B cell (primary cell): ENCODE measurements at regions of chr20 and their contacts with region 1.

Region 1: DNA sequence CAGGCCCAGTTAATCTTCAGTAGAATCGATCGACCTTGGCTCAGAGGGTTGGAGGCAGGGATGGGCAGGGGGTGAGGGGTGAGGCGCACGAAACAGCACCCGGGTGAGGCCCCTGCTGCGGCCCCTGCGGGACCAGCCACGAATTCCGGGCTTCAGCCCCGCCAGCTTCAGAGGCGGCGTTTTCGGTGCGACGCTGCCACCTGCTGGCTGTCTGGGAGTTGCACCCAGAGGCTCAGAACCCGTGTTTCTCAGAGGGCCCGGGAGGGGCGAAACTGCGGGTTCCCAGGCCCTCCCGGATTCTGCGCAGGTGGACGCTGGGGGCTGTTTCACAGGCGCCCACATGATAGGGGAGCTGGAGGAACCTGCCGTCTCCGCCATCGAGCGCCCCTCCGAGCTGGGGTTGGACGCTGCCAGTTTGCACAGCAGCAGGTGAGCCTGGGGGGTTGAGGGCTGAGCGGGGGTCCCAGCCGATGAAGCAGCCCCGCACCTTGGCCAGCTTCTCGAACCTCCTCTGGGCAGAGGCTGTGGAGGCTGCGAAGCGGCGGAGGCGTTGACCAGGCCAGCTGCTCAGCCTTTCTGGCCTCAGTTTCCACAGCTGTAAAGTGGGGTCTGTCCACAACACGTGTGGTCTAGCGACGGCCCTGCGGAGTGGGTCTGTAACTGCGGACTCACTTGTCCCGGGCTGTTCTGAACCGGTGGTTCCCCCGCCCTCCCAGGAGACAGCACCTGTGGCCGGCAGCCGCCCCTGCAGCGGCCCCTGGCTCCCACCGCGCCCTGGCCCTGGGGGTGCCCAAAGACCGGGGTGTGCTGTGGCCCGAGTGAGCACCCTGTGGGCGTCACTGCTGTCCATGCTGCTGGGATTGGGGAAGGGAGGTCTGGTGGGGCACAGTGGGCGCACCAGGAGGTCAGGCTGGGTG is 2.5 kb upstream of the BHLHE23 start:
- DNase-seq: peak; percentile 89
- ATAC-seq: peak; percentile 80
- H3K4me3 ChIP-seq: peak overlapping the region in 1 of 5 experiments; percentile 42
- H3K4me3 Mint-ChIP-seq: peak overlapping the region; percentile 86
- H3K27ac ChIP-seq: no peak overlapping the region
- H3K27ac Mint-ChIP-seq: peak overlapping the region; percentile 21
- H3K4me1 ChIP-seq: peaks cover 52 to 57% of the 10 kb centered on the region in 2 donors
- H3K4me1 Mint-ChIP-seq: peaks cover 21% of the 10 kb centered on the region
- H3K27me3 ChIP-seq: peaks cover 0 to 84% (median 51%) of the 10 kb centered on the region in 4 experiments
- H3K27me3 Mint-ChIP-seq: peaks cover 47% of the 10 kb centered on the region
- CTCF ChIP-seq: peak; percentile 95

Region 2: GRCh38 chr20:62668441-62669027 is 340.8 kb before region 1 on chr20:
- CTCF ChIA-PET with region 1: no interaction called
- POLR2A ChIA-PET with region 1: no interaction called
- intact Hi-C with region 1: loop called (anchors 2 kb)
- DNase-seq: peak; percentile 56
- ATAC-seq: no peak
- H3K4me3 ChIP-seq: no peak overlapping the region
- H3K4me3 Mint-ChIP-seq: no peak overlapping the region
- H3K27ac ChIP-seq: no peak overlapping the region
- H3K27ac Mint-ChIP-seq: no peak overlapping the region
- H3K4me1 ChIP-seq: no peaks in the 10 kb centered on the region
- H3K4me1 Mint-ChIP-seq: no peaks in the 10 kb centered on the region
- H3K27me3 ChIP-seq: no peaks in the 10 kb centered on the region
- H3K27me3 Mint-ChIP-seq: no peaks in the 10 kb centered on the region
- CTCF ChIP-seq: peak; percentile 73

Region 3: GRCh38 chr20:62846188-62846890 is 163.0 kb before region 1 on chr20:
- CTCF ChIA-PET with region 1: no interaction called
- POLR2A ChIA-PET with region 1: no interaction called
- intact Hi-C with region 1: no loop called
- DNase-seq: no peak
- ATAC-seq: no peak
- H3K4me3 ChIP-seq: no peak overlapping the region
- H3K4me3 Mint-ChIP-seq: no peak overlapping the region
- H3K27ac ChIP-seq: no peak overlapping the region
- H3K27ac Mint-ChIP-seq: no peak overlapping the region
- H3K4me1 ChIP-seq: no peaks in the 10 kb centered on the region
- H3K4me1 Mint-ChIP-seq: no peaks in the 10 kb centered on the region
- H3K27me3 ChIP-seq: no peaks in the 10 kb centered on the region
- H3K27me3 Mint-ChIP-seq: no peaks in the 10 kb centered on the region
- CTCF ChIP-seq: no peak

Region 4: GRCh38 chr20:62972270-62973032 is 36.9 kb before region 1 on chr20:
- CTCF ChIA-PET with region 1: interaction called, 36 read pairs
- POLR2A ChIA-PET with region 1: interaction called, 12 read pairs
- intact Hi-C with region 1: loop called (anchors 1 kb)
- DNase-seq: peak; percentile 88
- ATAC-seq: peak; percentile 96
- H3K4me3 ChIP-seq: peak overlapping the region in 3 of 5 experiments; percentile 38 to 49 (median 45)
- H3K4me3 Mint-ChIP-seq: peak overlapping the region; percentile 82
- H3K27ac ChIP-seq: no peak overlapping the region
- H3K27ac Mint-ChIP-seq: peak overlapping the region; percentile 37
- H3K4me1 ChIP-seq: peaks cover 21 to 26% of the 10 kb centered on the region in 2 donors
- H3K4me1 Mint-ChIP-seq: peaks cover 32% of the 10 kb centered on the region
- H3K27me3 ChIP-seq: peaks cover 0 to 65% (median 28%) of the 10 kb centered on the region in 4 experiments
- H3K27me3 Mint-ChIP-seq: peaks cover 39% of the 10 kb centered on the region
- CTCF ChIP-seq: peak; percentile 85

Region 5: DNA sequence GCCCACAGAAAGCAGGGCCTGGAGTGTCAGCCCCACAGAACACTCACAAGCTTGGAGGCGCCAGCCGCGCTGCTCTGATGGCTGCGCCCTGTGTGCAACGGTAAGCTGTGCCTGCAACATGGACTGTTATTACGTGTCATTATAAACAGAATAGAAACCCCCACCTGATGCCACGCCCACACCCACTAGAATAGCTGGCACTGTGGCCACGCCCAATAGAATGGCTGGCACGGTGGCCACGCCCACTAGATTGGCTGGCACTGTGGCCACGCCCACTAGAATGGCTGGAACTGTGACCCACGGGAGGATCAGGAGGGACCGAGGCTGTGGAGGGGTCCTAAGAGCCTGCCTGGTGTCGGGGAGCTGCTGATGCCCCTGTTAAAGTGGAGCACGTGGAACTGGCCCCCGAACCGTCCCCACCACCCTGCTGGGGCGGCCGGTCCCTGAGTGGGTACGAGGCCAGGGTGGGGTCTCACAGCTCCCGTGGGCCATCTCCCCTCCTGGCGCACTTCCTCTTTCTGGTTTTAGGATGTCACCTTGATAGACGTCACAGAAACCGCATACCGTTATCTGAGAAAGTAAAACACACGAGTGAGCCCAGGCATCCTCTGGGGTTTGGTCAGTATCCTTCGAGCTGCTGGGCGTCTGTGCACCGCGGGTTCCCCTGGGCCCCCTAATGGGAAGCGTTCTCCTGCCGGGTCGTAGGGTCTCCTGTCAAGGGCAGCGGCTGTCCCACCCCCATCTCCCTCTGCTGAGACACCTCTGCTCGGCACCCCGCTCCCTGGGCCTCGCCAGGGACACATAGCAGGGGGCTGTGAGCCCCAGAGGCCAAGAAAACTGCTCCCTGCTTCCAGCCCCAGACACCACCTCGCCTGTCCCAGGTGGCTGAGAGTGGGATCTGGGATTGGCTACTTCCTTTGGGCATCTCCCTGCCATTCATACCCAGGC is 31.4 kb before region 1 on chr20:
- CTCF ChIA-PET with region 1: interaction called, 3 read pairs
- POLR2A ChIA-PET with region 1: interaction called, 12 read pairs
- intact Hi-C with region 1: loop called (anchors 1 kb)
- DNase-seq: peak; percentile 96
- ATAC-seq: peak; percentile 79
- H3K4me3 ChIP-seq: peak overlapping the region in 4 of 5 experiments; percentile 12 to 54 (median 35)
- H3K4me3 Mint-ChIP-seq: peak overlapping the region; percentile 88
- H3K27ac ChIP-seq: no peak overlapping the region
- H3K27ac Mint-ChIP-seq: peak overlapping the region; percentile 91
- H3K4me1 ChIP-seq: peaks cover 63 to 64% of the 10 kb centered on the region in 2 donors
- H3K4me1 Mint-ChIP-seq: peaks cover 51% of the 10 kb centered on the region
- H3K27me3 ChIP-seq: peaks cover 0 to 95% (median 53%) of the 10 kb centered on the region in 4 experiments
- H3K27me3 Mint-ChIP-seq: peaks cover 47% of the 10 kb centered on the region
- CTCF ChIP-seq: no peak

Region 6: DNA sequence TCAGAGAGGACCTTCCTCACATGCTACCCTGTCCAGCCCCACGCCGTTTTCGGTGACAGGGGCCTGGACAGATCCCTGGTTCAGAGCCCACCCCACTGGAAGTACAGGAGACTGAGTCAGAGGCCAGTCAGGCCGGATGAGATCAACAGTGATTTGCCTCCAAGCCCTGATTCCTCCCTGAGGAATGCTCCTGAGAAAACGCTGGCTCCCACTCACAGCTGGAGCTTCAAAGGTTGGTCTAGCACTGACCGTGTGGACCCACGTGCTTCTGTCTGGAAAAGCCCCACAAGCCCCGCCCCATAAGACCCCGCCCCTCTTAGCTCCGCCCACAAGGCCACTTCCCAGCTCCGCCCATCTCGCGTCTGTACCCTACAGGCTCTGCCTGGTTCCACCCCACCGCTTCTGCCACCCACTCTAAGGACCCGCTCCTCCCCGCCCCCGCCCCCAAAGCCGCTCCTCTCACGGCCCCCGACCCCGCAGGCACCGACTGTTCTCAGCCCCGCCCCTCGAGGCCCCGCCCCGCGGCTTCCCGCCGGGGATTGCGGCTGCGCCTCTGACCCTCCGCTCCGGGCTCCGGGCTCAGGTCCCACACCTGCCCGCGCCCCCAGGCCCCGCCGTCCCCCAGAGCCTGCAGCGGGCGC is 62.4 kb after region 1 on chr20:
- CTCF ChIA-PET with region 1: no interaction called
- POLR2A ChIA-PET with region 1: no interaction called
- intact Hi-C with region 1: no loop called
- DNase-seq: no peak
- ATAC-seq: peak; percentile 39
- H3K4me3 ChIP-seq: no peak overlapping the region
- H3K4me3 Mint-ChIP-seq: no peak overlapping the region
- H3K27ac ChIP-seq: no peak overlapping the region
- H3K27ac Mint-ChIP-seq: no peak overlapping the region
- H3K4me1 ChIP-seq: peaks cover 0 to 7% of the 10 kb centered on the region in 2 donors
- H3K4me1 Mint-ChIP-seq: no peaks in the 10 kb centered on the region
- H3K27me3 ChIP-seq: peaks cover 0 to 25% (median 13%) of the 10 kb centered on the region in 4 experiments
- H3K27me3 Mint-ChIP-seq: peaks cover 31% of the 10 kb centered on the region
- CTCF ChIP-seq: no peak